ENCODE measurements at regions of chr6 and their contacts with region 1.

Region 1: DNA sequence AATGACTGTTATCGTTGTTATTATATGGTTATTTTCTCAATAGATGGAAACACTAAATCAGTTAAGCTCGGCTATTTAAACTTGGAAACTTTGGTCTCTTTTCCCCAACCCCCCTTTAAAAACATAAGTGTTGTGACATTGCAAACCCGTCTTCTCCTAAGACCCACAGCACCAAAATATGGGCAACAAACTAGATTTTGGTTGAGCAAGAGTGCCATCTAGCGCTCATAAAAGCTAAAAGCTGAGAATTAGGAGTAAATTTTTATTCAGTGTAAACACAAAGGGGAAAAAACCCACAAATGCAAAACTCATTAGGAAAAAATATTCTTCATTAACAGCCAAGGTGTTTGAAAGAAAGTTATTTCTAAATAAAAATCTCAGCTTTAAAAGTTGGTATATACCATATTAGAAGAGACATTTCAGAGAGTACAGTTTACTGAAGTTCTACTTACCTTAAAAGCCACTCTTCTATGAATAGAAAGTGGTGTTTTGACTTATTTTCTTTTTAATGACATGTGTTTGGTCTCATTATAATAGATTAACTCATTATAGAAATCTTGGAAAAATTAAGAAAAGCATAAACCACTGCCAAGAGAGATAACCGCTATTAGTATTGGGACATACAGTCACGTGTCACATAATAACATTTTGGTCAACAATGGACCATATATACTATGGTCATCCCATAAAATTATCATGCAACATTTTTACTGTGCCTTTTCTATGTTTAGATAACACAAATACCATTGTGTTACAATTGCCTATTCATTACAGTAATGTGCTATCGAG is 21.1 kb downstream of the SESN1 start:
- DNase-seq: peak in 8 of 9 experiments; percentile 8 to 87 (median 50)
- ATAC-seq: peak; percentile 69
- H3K4me3 ChIP-seq: no peak overlapping the region
- H3K4me3 Mint-ChIP-seq: no peak overlapping the region
- H3K27ac ChIP-seq: no peak overlapping the region
- H3K27ac Mint-ChIP-seq: no peak overlapping the region
- H3K4me1 ChIP-seq: peaks cover 23% of the 10 kb centered on the region
- H3K4me1 Mint-ChIP-seq: peaks cover 33% of the 10 kb centered on the region
- H3K27me3 ChIP-seq: no peaks in the 10 kb centered on the region
- H3K27me3 Mint-ChIP-seq: no peaks in the 10 kb centered on the region
- CTCF ChIP-seq: peak; percentile 91

Region 2: DNA sequence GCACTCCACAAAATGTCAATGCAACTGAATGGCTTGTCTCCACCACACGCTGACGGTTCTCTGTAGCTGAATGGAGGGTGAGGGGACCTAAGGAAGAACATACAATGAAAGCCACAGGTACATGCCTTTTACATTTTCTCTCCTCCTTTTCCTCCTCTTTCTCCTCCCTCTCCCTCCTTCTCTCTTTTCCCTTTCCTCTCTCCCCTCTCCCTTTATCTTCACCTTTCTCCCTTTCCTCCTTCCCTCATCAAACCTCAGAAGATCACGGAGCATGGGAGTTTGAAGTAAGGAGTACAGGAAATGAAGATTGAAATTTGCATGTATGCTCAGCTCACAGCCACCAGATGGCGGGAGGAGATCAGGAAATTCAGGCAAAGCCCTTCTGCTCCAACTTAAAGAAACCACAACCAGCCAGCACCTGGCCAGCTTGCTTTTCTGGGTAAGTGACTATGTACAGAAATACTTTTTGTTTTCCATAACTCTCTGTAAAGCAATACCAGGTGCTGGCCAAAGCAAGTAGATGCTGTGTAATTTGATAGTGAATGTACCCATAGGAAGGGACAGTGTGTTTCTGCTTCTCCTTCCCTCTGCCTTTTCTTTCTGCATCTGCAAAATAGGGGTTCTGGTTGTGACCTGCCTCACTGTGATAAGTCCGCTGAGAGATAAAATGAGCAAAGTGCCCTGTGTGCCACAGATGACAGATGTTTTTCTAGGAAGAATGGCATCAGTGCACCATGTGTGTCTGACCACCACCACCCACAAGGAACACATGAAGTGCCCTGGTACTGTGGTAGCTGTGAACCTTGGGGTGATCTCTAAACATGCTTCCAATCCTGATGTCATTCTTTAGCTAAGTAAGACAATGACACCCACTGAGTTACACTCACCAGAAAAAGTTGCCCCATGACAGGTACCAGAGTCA is 531.4 kb before region 1 on chr6:
- CTCF ChIA-PET with region 1: interaction called, 184 read pairs
- POLR2A ChIA-PET with region 1: interaction called, 5 read pairs
- intact Hi-C with region 1: loop called (anchors 1 kb)
- DNase-seq: peak; percentile 39 to 87 (median 69)
- ATAC-seq: peak; percentile 92
- H3K4me3 ChIP-seq: no peak overlapping the region
- H3K4me3 Mint-ChIP-seq: no peak overlapping the region
- H3K27ac ChIP-seq: no peak overlapping the region
- H3K27ac Mint-ChIP-seq: no peak overlapping the region
- H3K4me1 ChIP-seq: peaks cover 12% of the 10 kb centered on the region
- H3K4me1 Mint-ChIP-seq: peaks cover 16% of the 10 kb centered on the region
- H3K27me3 ChIP-seq: no peaks in the 10 kb centered on the region
- H3K27me3 Mint-ChIP-seq: no peaks in the 10 kb centered on the region
- CTCF ChIP-seq: peak; percentile 95

Region 3: GRCh38 chr6:108835218-108835850 is 238.2 kb before region 1 on chr6:
- CTCF ChIA-PET with region 1: interaction called, 29 read pairs
- POLR2A ChIA-PET with region 1: no interaction called
- intact Hi-C with region 1: loop called (anchors 1 kb)
- DNase-seq: peak; percentile 66 to 90 (median 85)
- ATAC-seq: peak; percentile 99
- H3K4me3 ChIP-seq: no peak overlapping the region
- H3K4me3 Mint-ChIP-seq: no peak overlapping the region
- H3K27ac ChIP-seq: no peak overlapping the region
- H3K27ac Mint-ChIP-seq: no peak overlapping the region
- H3K4me1 ChIP-seq: peaks cover 14% of the 10 kb centered on the region
- H3K4me1 Mint-ChIP-seq: peaks cover 23% of the 10 kb centered on the region
- H3K27me3 ChIP-seq: no peaks in the 10 kb centered on the region
- H3K27me3 Mint-ChIP-seq: no peaks in the 10 kb centered on the region
- CTCF ChIP-seq: peak; percentile 89

Region 4: GRCh38 chr6:108914235-108915022 is 159.1 kb before region 1 on chr6:
- CTCF ChIA-PET with region 1: interaction called, 50 read pairs
- POLR2A ChIA-PET with region 1: no interaction called
- intact Hi-C with region 1: loop called in 1 of 2 experiments (anchors 2 kb)
- DNase-seq: peak in 7 of 9 experiments; percentile 17 to 71 (median 37)
- ATAC-seq: peak; percentile 61
- H3K4me3 ChIP-seq: no peak overlapping the region
- H3K4me3 Mint-ChIP-seq: no peak overlapping the region
- H3K27ac ChIP-seq: peak overlapping the region in 1 of 2 experiments; percentile 12
- H3K27ac Mint-ChIP-seq: no peak overlapping the region
- H3K4me1 ChIP-seq: no peaks in the 10 kb centered on the region
- H3K4me1 Mint-ChIP-seq: peaks cover 5% of the 10 kb centered on the region
- H3K27me3 ChIP-seq: no peaks in the 10 kb centered on the region
- H3K27me3 Mint-ChIP-seq: no peaks in the 10 kb centered on the region
- CTCF ChIP-seq: peak; percentile 44

Region 5: DNA sequence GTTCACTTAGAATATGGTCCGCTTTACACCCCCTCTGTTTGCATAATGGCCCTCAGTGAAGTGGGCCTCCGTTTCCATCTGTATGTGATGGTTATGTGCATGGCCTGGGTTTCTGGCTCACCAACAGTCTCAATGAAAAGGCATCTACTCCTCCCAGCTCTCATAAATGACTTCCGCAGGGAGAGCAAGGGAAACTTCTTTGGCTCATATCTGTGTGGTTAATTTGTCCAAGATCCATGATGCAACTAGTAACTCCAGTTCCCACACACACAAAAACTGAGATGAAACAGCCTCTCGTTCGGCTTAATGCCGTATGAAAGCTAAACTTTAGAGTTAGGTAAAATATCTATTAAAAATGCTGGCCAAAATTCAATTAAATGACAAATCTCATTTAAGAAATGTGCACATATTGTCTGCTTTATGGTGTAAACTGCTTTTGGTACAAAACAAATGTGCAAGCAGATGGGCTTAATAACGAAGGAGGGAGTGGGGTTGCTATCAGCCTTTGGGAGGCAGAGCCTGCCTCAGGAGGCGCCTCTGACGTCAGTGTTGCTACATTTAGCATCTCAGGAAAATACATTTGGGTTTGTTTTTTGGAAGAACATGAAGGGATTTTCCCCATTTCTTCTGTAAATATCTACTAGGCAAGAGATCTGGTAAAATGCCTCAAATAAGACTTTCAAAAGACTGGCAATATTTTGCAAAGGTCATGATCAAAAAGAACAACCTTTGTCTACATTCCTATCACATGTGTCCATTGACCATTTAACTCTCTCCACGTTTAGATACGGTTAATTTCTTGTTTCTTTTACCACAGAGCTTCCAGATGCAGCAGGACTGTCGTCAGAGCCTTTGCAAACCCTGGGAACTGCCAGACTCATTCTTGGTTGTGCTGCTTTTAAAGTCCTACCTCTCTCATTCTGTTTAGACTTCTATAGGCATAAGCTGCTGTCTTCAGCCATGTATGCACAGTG is 128.5 kb before region 1 on chr6:
- CTCF ChIA-PET with region 1: interaction called, 6 read pairs
- POLR2A ChIA-PET with region 1: no interaction called
- intact Hi-C with region 1: loop called in 1 of 2 experiments (anchors 2 kb)
- DNase-seq: no peak
- ATAC-seq: no peak
- H3K4me3 ChIP-seq: no peak overlapping the region
- H3K4me3 Mint-ChIP-seq: no peak overlapping the region
- H3K27ac ChIP-seq: no peak overlapping the region
- H3K27ac Mint-ChIP-seq: peak overlapping the region; percentile 37
- H3K4me1 ChIP-seq: peaks cover 27% of the 10 kb centered on the region
- H3K4me1 Mint-ChIP-seq: peaks cover 48% of the 10 kb centered on the region
- H3K27me3 ChIP-seq: no peaks in the 10 kb centered on the region
- H3K27me3 Mint-ChIP-seq: no peaks in the 10 kb centered on the region
- CTCF ChIP-seq: no peak

Region 6: DNA sequence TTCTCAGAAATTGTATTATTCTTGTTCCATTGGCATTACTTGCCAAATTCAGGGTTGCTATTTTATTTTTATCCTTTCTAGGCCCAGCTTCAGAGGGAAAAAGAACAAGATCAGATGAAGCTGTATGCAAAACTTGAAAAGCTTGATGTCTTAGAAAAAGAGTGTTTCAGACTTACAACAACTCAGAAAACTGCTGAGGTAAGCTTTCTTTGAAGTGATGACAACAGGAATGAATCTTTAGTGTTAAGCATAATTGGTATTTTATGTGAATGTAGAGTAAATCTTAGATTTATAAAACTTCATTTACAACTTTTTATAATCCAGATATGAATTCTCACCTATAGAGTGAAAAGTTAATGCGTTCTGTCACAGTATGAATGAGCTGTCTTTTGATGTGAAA is 80.2 kb after region 1 on chr6:
- CTCF ChIA-PET with region 1: no interaction called
- POLR2A ChIA-PET with region 1: no interaction called
- intact Hi-C with region 1: no loop called
- DNase-seq: no peak
- ATAC-seq: no peak
- H3K4me3 ChIP-seq: no peak overlapping the region
- H3K4me3 Mint-ChIP-seq: no peak overlapping the region
- H3K27ac ChIP-seq: no peak overlapping the region
- H3K27ac Mint-ChIP-seq: no peak overlapping the region
- H3K4me1 ChIP-seq: no peaks in the 10 kb centered on the region
- H3K4me1 Mint-ChIP-seq: no peaks in the 10 kb centered on the region
- H3K27me3 ChIP-seq: no peaks in the 10 kb centered on the region
- H3K27me3 Mint-ChIP-seq: no peaks in the 10 kb centered on the region
- CTCF ChIP-seq: no peak